ENCODE measurements at regions of chr10 and their contacts with region 1.

Region 1: DNA sequence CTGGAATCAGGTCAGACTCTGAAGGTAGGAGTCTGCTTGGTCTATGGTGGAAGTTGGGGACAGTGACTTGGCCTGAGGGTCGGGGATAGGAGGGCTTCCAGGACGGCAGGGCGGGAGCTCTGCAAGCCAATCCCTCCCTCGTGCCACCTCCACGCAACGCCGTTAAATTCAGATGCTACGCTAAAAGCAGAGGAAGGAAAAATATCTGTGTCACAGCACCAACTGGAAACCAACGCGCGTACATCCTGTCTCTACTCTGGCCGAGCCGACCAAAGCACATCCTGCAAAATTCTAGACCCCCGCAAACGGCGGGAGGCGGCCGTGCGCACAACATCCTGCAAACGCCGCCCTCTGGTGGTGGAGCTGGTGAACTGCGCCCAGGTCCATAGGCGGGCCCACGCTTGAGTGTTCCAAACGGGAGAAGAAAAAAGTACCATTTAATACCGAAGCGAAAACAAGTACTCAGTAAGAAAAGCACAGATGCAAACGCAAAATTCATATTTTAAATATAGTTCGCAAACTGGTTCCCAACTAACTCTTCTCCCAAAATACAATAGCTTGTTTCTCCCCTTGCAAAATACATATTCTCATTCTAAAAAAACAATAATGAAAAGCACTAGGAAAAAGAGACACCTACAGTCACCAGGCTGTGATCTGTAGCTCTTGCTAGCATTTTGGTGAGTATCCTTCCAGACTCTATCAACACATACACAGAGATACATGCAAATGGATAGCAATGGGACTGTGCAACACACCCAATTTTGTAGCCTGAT is 45.7 kb upstream of the HSPA12A start:
- DNase-seq: peak; percentile 50 to 87 (median 77)
- ATAC-seq: peak; percentile 90
- H3K4me3 ChIP-seq: no peak overlapping the region
- H3K4me3 Mint-ChIP-seq: peak overlapping the region; percentile 69
- H3K27ac ChIP-seq: no peak overlapping the region
- H3K27ac Mint-ChIP-seq: peak overlapping the region; percentile 75
- H3K4me1 ChIP-seq: peaks cover 5% of the 10 kb centered on the region
- H3K4me1 Mint-ChIP-seq: peaks cover 14% of the 10 kb centered on the region
- H3K27me3 ChIP-seq: no peaks in the 10 kb centered on the region
- H3K27me3 Mint-ChIP-seq: peaks cover 25% of the 10 kb centered on the region
- CTCF ChIP-seq: peak; percentile 99

Region 2: GRCh38 chr10:116683821-116684220 is 104.3 kb before region 1 on chr10:
- CTCF ChIA-PET with region 1: interaction called, 49 read pairs
- POLR2A ChIA-PET with region 1: interaction called, 6 read pairs
- intact Hi-C with region 1: loop called in 1 of 2 experiments (anchors 1 kb)
- DNase-seq: no peak
- ATAC-seq: no peak
- H3K4me3 ChIP-seq: no peak overlapping the region
- H3K4me3 Mint-ChIP-seq: no peak overlapping the region
- H3K27ac ChIP-seq: no peak overlapping the region
- H3K27ac Mint-ChIP-seq: no peak overlapping the region
- H3K4me1 ChIP-seq: no peaks in the 10 kb centered on the region
- H3K4me1 Mint-ChIP-seq: no peaks in the 10 kb centered on the region
- H3K27me3 ChIP-seq: no peaks in the 10 kb centered on the region
- H3K27me3 Mint-ChIP-seq: peaks cover 28% of the 10 kb centered on the region
- CTCF ChIP-seq: no peak

Region 3: DNA sequence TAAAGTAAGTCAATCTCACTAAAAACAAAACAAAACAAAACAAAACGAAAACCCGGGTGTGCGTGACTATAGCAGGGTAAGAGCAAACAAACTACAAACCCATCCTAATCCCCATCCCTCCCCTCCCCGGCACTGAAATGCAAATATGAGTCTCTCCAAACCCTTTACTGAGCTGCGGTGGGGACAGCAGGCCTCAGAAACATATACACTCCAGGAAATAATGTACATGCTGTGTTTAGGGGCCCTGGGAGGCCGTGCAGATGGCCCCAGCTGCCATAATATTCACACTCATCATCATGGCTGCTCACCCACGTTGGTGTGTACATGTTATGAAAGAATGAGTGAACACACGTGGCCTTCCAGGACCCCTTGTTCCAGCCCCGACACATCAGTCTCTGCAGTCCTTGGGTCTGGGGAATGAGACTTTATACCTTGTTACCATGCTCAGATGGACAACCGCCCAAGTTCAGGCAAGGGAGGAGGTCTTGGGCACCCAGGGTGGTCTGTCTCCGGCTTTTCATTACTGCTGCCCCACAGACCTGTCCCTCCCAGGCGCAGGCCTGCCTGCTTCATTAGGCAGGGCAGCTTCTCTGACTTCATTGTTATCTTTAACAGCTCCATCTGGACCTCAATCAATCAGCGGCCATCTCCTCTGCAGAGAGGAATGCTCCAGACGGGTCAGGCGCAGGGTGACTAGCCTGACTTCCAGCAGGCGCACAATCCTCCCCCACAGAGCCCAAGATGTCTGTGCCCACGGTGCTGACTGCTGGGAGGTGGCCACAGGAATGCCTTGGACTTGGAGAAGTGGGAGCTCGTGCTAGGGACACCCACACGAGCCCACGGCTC is 66.3 kb before region 1 on chr10:
- CTCF ChIA-PET with region 1: interaction called, 10 read pairs
- POLR2A ChIA-PET with region 1: no interaction called
- intact Hi-C with region 1: no loop called
- DNase-seq: no peak
- ATAC-seq: no peak
- H3K4me3 ChIP-seq: no peak overlapping the region
- H3K4me3 Mint-ChIP-seq: no peak overlapping the region
- H3K27ac ChIP-seq: no peak overlapping the region
- H3K27ac Mint-ChIP-seq: no peak overlapping the region
- H3K4me1 ChIP-seq: peaks cover 27% of the 10 kb centered on the region
- H3K4me1 Mint-ChIP-seq: peaks cover 33% of the 10 kb centered on the region
- H3K27me3 ChIP-seq: peaks cover 7 to 54% of the 10 kb centered on the region in 2 experiments
- H3K27me3 Mint-ChIP-seq: peaks cover 65% of the 10 kb centered on the region
- CTCF ChIP-seq: no peak